Right lobe of liver (tissue), 6 donors: ENCODE measurements at regions of chr1 and their contacts with region 1.

Region 1: DNA sequence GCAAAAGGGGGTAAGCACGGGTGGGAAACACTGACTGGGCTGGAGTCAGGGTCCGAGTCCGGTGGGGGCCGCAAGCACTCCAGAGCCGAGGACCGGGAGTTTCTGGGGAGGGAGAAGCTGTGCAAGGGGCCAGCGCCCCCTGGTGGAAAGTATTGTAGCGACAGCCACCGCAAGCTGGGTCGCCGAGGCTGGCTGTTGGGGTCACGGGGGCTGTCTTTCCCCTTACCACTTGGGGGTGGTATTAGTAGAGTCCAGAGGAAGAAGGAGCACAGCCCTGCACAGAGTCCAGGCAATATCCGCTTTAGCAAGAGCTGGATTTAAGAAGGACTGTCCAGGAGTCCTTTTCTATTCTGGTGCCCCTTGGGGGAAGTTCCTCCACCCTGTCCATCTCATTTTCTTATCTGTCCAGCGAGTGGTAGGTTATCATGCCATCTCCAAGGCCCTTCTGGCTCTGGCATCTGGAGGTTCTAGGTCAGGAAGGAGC is 17.9 kb upstream of the ETV3 start:
- DNase-seq: peak; percentile 79 to 80 (median 79)
- ATAC-seq: peak; percentile 74 to 79 (median 77)
- H3K4me3 ChIP-seq: peak overlapping the region in 2 of 3 donors; percentile 9 to 15
- H3K27ac ChIP-seq: no peak overlapping the region
- H3K4me1 ChIP-seq: peaks cover 0 to 27% (median 13%) of the 10 kb centered on the region in 4 donors
- H3K27me3 ChIP-seq: no peaks in the 10 kb centered on the region
- CTCF ChIP-seq: peak; percentile 94 to 98 (median 96)
- POLR2A ChIP-seq: no peak

Region 2: GRCh38 chr1:157090196-157090647 is 65.9 kb before region 1 on chr1:
- intact Hi-C with region 1: loop called (anchors 1 to 2 kb)
- DNase-seq: peak; percentile 86
- ATAC-seq: peak; percentile 79 to 88 (median 83)
- H3K4me3 ChIP-seq: no peak overlapping the region
- H3K27ac ChIP-seq: no peak overlapping the region
- H3K4me1 ChIP-seq: peaks cover 0 to 5% (median 0%) of the 10 kb centered on the region in 4 donors
- H3K27me3 ChIP-seq: no peaks in the 10 kb centered on the region
- CTCF ChIP-seq: peak; percentile 91 to 97 (median 96)
- POLR2A ChIP-seq: no peak

Region 3: GRCh38 chr1:157274698-157275534 is 118.8 kb after region 1 on chr1:
- intact Hi-C with region 1: no loop called
- DNase-seq: no peak
- ATAC-seq: peak in 1 of 4 donors; percentile 18
- H3K4me3 ChIP-seq: no peak overlapping the region
- H3K27ac ChIP-seq: no peak overlapping the region
- H3K4me1 ChIP-seq: no peaks in the 10 kb centered on the region
- H3K27me3 ChIP-seq: no peaks in the 10 kb centered on the region
- CTCF ChIP-seq: no peak
- POLR2A ChIP-seq: no peak